ENCODE measurements at regions of chr17 and their contacts with region 1.

Region 1: DNA sequence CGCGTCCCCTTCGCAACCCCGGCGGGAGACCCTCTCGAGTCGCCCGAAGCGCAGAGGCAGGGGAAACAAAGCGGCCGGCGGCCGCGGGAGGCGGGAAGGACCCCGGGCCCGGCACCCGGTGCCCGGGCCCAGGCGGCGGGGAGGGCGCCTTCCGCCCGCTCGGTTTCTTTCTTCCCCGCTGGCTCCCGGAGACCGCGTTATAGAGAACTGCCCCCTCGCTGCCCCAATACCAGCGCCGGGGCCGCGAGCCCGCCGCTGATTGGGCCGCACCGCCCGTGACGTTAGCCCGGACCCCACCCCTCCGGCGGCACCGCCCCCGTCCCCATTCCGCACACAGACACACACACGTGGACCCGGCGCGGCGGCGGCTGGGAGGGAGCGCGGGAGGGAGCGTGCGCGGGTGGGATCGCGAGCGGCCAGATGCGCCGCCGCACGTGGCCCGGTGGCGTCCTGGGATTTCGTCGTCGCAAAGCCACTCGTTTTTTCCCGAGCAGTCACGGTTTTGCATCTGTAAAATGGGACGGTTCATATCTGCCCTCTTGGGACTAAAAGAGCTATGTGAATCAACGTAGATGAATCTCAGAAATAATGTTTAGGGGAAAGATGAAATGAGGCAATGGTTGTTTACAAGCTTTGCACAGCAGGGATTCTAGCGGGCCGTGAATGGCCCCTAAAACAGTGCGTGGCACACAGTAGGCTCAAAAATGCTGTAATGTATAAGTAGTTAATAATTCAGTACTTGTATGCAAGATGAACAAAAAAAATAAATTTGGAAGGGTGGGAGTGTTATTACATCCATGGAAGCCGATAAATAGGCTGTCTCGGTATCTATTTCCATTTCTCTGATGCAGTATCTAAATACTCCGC is at the start of gene EPOP:
- DNase-seq: peak; percentile 90 to 94 (median 91)
- H3K4me3 ChIP-seq: peak within 1 kb of the TSS in 2 of 4 donors; percentile 47 to 61
- H3K27ac ChIP-seq: peak within 1 kb of the TSS in 1 of 5 donors; percentile 36
- H3K4me1 ChIP-seq: peaks cover 11 to 23% of the 10 kb centered on the region in 2 donors
- H3K27me3 ChIP-seq: peaks cover 4% of the 10 kb centered on the region
- CTCF ChIP-seq: no peak
- POLR2A ChIP-seq: peak in 1 of 2 donors; percentile 79
- total RNA-seq, gene EPOP: 0.06 to 9.4 (median 3.7) TPM

Region 2: GRCh38 chr17:38735161-38735997 is 60.4 kb after region 1 on chr17:
- intact Hi-C with region 1: loop called (anchors 5 kb)
- DNase-seq: peak; percentile 65 to 81 (median 73)
- H3K4me3 ChIP-seq: no peak overlapping the region
- H3K27ac ChIP-seq: peak overlapping the region in 3 of 5 donors; percentile 52 to 82 (median 59)
- H3K4me1 ChIP-seq: peaks cover 39 to 47% of the 10 kb centered on the region in 2 donors
- H3K27me3 ChIP-seq: no peaks in the 10 kb centered on the region
- CTCF ChIP-seq: peak; percentile 81 to 99 (median 96)
- POLR2A ChIP-seq: peak in 1 of 2 donors; percentile 17

Region 3: GRCh38 chr17:38912221-38912813 is 237.3 kb after region 1 on chr17:
- intact Hi-C with region 1: no loop called
- DNase-seq: peak in 6 of 7 donors; percentile 68 to 90 (median 84)
- H3K4me3 ChIP-seq: no peak overlapping the region
- H3K27ac ChIP-seq: peak overlapping the region in 3 of 5 donors; percentile 33 to 73 (median 47)
- H3K4me1 ChIP-seq: peaks cover 12 to 16% of the 10 kb centered on the region in 2 donors
- H3K27me3 ChIP-seq: no peaks in the 10 kb centered on the region
- CTCF ChIP-seq: no peak
- POLR2A ChIP-seq: no peak